ENCODE measurements at regions of chr10 and their contacts with region 1.

Region 1: DNA sequence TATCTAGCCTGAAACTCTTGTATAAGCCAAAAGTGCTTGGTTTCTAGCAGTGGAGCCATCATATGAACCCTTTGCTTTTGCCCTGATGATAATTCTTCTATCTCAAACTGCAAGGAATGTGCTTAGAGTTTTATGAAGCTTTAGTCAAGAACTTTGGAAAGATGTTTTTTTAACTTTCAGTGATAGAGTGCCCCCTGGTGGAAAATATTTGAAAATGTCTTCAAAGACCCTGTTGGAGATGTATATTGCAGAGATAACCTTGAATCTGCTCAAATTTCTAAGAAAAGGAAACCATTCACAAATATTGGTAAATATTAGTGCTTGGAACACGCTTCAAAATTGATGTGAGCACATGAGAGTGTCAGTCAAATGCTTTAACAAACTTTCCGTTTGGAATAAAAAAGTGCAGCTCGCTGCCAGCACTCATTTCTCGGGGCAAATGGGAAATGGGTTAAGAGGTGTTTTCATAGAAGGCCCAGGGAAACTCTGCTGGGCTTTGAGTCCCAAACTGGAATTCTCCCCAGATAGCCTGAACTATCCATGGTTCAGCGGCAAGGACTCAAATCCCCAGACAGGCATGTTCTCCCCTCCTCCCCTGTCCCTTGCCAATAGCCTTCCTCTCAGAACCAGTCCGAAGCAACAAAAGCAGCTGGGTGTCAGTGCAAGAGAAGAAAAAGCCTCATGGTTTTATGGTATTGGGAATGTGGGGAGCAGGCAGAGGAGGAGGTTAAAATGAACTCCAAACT is 129.3 kb downstream of the MYOF start:
- DNase-seq: peak; percentile 52
- H3K4me3 ChIP-seq: no peak overlapping the region
- H3K27ac ChIP-seq: no peak overlapping the region
- H3K4me1 ChIP-seq: no peaks in the 10 kb centered on the region
- CTCF ChIP-seq: peak; percentile 92

Region 2: DNA sequence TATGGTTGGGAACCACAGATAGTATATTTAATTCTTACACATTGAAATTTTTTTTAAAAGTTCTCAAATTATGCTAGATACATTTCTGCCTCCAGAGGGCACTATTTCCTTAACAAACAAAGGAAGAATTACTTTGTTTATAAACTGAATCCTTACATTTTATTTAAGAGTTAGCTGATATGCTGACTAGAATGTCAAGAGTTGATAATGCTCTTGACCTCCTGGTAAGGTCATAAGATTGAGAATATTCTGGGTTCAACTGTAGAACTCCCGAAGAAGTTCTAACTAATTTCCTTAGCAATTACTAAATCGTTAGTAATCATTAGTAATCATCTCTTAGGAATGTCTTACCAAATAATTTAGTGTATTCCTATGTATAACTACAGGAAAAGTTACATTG is 387.5 kb before region 1 on chr10:
- CTCF ChIA-PET with region 1: no interaction called
- POLR2A ChIA-PET with region 1: no interaction called
- intact Hi-C with region 1: loop called (anchors 10 kb)
- DNase-seq: peak; percentile 58
- H3K4me3 ChIP-seq: no peak overlapping the region
- H3K27ac ChIP-seq: no peak overlapping the region
- H3K4me1 ChIP-seq: no peaks in the 10 kb centered on the region
- CTCF ChIP-seq: peak; percentile 94

Region 3: GRCh38 chr10:93080350-93081046 is 272.3 kb before region 1 on chr10:
- CTCF ChIA-PET with region 1: interaction called, 3 read pairs
- POLR2A ChIA-PET with region 1: no interaction called
- intact Hi-C with region 1: loop called (anchors 5 kb)
- DNase-seq: peak; percentile 43
- H3K4me3 ChIP-seq: no peak overlapping the region
- H3K27ac ChIP-seq: no peak overlapping the region
- H3K4me1 ChIP-seq: no peaks in the 10 kb centered on the region
- CTCF ChIP-seq: peak; percentile 90

Region 4: DNA sequence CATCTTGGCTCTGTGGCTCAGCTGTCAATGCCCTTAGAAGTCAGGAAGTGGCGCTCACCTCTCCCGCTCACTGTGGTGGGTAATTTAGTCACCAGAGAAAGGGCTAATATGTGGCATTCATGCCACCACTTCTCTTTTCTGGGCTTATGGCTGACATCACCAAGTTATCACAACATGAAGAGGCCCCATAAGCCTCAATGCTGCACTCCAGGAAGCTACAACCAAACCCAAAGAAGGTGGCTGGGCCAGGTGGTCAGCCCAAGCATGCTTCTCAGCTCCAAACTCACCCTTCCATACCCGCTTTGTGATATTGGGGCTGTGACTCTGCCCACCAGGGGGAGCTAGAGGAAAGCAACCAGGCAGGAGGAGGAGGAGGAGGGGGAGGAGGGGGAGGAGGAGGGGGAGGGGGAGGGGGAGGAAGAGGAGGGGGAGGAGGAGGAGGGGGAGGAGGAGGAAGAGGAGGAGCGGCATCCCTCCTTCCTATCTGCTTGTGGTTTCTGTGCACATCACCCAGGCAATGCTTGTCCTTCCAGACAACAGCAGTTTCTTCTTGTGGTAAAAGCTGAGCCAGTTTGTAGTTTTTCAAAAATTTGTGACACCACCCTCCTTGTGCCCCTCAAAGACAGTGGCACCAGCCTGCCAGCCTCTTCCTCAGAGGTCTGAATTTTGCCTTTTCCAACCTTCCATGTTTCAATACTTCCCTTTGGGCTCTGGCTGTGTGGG is 237.0 kb before region 1 on chr10:
- CTCF ChIA-PET with region 1: no interaction called
- POLR2A ChIA-PET with region 1: no interaction called
- intact Hi-C with region 1: loop called (anchors 5 kb)
- DNase-seq: peak; percentile 74
- H3K4me3 ChIP-seq: no peak overlapping the region
- H3K27ac ChIP-seq: no peak overlapping the region
- H3K4me1 ChIP-seq: peaks cover 5% of the 10 kb centered on the region
- CTCF ChIP-seq: peak; percentile 70

Measured in OCI-LY7 (cell line).